ENCODE measurements at regions of chr20 and their contacts with region 1.

Region 1: DNA sequence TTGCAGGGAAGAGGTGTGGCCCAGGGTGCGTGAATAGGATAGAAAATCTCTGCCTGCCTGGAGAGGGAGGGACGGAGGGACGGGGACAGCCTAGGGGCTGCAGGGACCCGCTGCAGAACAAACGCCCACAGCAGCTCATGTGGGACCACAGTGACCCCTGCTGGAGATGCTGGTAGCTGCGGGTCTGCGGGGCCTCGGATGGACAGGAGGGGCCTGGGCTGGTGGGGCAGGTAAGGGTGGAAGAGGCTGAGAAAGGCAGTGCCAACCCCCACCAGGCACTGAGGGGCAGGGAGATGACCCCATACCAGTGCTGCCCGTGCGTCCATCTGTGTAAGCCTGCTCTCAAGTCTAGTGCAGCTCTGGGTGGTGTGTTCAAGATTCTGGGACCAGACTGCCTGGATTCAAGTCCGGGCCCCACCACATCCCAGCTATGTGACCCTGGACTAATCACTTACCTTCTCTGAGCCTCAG is 39.4 kb downstream of the KIAA1755 start:
- DNase-seq: peak; percentile 90
- CTCF ChIP-seq: peak; percentile 94

Region 2: GRCh38 chr20:37901654-37902503 is 319.3 kb before region 1 on chr20:
- in situ Hi-C with region 1: loop called (anchors 25 kb)
- DNase-seq: peak; percentile 87
- CTCF ChIP-seq: peak; percentile 73

Region 3: DNA sequence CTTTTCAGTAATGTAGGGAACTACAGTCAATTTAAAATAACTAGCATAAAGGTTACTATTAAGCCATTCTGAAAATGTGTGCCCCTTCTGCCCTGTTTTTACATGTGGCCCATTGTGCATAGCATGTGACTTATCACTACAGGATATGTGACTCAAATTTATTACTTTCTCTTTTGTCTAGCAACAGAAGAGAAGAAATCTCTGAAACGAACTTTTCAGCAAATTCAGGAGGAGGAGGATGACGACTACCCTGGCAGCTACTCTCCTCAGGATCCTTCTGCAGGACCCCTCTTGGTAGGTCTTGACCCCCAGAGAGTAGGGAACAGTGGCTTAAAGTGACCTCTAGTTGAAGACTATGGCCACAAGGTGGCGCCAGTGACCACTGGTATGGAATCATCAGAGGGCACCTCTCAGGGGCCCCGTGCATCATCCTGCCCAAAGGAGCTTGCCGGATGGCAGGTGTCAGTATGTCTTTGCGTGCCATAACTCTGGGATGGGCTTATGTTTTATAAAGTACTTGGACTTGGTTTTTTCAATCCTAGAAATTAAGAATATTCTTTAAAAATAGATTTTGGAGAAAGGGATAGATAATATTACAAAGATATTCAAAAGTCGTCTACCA is 163.7 kb before region 1 on chr20:
- in situ Hi-C with region 1: loop called (anchors 5 kb)
- DNase-seq: peak; percentile 69
- CTCF ChIP-seq: peak; percentile 58

Region 4: GRCh38 chr20:38645980-38646858 is 425.1 kb after region 1 on chr20:
- in situ Hi-C with region 1: no loop called
- DNase-seq: peak; percentile 94
- CTCF ChIP-seq: peak; percentile 97